Activated CD8-positive, alpha-beta T cell treated with anti-CD3 and anti-CD28 coated beads for 36 hours (primary cell): ENCODE measurements at regions of chr2 and their contacts with region 1.

Region 1: DNA sequence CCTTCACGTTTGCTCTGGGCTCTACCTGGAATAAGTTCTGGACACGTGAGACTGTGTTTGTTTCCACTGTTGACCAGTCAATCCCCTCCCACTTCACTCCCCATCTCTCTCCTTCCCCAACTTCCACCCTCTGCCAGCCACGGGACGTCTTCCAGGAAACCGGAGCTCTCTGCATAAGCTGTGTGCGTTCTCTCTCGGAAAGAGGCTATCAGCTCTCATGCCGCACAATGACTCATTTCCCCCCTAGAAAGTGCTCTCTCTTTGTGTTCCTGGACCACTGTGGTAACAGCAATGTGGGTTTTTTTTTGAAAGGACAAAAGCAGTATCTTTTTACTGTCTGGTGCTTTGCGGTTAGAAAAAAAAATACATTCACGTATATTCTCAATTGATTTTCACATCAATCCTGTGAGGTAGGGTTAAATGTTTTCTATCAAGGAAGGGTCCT is 10.2 kb downstream of the PROKR1 start:
- DNase-seq: peak; percentile 80
- ATAC-seq: peak; percentile 81
- H3K4me3 Mint-ChIP-seq: peak overlapping the region; percentile 42
- H3K27ac Mint-ChIP-seq: peak overlapping the region; percentile 84
- H3K4me1 Mint-ChIP-seq: peaks cover 47% of the 10 kb centered on the region
- H3K27me3 Mint-ChIP-seq: peaks cover 27% of the 10 kb centered on the region
- CTCF ChIP-seq: no peak

Region 2: GRCh38 chr2:68726608-68727367 is 73.2 kb after region 1 on chr2:
- CTCF ChIA-PET with region 1: interaction called, 3 read pairs
- POLR2A ChIA-PET with region 1: no interaction called
- intact Hi-C with region 1: loop called (anchors 5 kb)
- DNase-seq: peak; percentile 96
- ATAC-seq: peak; percentile 94
- H3K4me3 Mint-ChIP-seq: peak overlapping the region; percentile 35
- H3K27ac Mint-ChIP-seq: peak overlapping the region; percentile 81
- H3K4me1 Mint-ChIP-seq: peaks cover 58% of the 10 kb centered on the region
- H3K27me3 Mint-ChIP-seq: no peaks in the 10 kb centered on the region
- CTCF ChIP-seq: no peak